ENCODE measurements at regions of chr6 and their contacts with region 1.

Region 1: DNA sequence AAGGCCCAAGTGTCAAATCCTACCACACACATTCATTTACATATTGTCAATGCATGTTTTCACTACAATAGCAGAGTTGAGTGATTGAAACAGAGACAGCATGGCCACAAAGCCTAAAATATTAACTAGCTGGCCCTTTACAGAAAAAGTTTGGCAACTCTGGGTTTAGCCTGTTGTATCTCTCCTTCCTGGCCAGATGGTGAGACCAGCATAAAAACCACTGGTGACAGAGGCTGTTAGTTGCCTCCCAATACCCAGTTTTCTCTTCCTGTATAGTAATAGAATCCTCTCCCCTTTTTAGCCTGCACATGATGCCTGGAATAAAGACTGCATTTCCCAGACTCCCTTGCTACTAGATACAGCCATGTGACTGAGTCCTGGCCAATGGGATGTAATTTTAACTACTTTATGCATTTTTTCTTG is 100.0 kb upstream of the TAB2 start:
- DNase-seq: no peak
- ATAC-seq: no peak

Region 2: DNA sequence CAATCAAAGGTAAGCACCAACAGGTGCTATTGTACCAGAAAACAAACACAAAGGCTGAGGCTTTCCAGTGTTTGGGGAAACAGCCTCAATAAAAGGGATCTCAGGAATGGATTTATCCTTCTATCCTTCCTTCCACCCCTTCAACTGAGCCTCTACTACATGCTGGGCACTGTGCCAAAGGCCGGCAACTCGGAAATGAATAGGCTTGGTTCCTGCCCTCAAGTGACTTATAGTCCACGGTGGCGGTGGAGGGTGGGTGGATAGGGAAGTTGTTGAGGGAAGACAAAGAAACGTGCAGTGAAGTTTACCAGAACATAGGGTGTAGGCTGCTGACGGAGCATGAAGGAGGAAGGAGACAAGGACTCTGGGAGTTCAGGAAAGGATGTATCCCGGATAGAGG is 26.6 kb after region 1 on chr6:
- intact Hi-C with region 1: loop called (anchors 1 kb)
- DNase-seq: no peak
- ATAC-seq: no peak

Region 3: GRCh38 chr6:149284904-149285303 is 67.4 kb after region 1 on chr6:
- intact Hi-C with region 1: no loop called
- DNase-seq: no peak
- ATAC-seq: no peak

Region 4: DNA sequence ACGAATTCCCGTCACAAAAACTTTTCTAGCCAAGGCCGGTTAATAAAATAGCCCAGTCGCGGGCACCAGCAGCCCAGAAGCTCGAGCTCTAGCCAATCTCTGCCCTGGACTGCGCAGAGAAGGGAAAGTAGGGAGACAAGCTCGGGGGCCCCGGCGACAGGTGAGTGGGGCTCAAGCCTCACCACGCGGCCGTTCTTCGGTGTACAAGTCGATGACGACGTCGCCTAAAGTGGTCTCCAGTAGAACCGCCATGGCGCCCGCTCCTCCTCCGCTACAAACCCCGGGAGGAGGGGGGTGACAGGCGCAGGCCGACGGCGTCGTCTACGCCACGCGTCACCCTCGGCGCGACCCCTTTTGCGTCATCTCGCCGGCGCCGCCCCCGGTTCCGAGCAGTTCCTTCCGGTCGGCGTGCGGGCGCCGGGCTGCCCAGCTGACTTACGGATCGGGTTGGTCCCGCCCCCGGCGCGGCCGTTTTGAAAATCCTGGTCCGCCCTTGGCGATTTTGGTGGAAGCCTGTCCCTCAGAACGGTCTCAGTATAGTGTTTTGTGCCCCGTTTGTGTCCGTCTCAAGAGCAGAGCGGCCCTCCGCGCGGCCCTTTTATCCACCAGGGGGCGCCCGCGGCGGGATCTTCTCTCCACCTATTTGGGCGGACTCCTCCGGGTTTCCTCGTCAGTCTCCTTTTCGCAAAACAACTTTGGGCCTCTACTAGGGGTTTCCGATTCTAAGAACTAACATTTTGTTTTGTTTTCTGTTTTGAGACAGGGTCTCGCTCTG is 328.5 kb after region 1 on chr6 and contains the start of gene PPIL4:
- intact Hi-C with region 1: loop called (anchors 2 kb)
- DNase-seq: peak; percentile 98
- ATAC-seq: peak; percentile 99
- total RNA-seq, gene PPIL4: 37.4 TPM

Measured in sciatic nerve (tissue), 2 donors.